ENCODE measurements at regions of chr3 and their contacts with region 1.

Region 1: DNA sequence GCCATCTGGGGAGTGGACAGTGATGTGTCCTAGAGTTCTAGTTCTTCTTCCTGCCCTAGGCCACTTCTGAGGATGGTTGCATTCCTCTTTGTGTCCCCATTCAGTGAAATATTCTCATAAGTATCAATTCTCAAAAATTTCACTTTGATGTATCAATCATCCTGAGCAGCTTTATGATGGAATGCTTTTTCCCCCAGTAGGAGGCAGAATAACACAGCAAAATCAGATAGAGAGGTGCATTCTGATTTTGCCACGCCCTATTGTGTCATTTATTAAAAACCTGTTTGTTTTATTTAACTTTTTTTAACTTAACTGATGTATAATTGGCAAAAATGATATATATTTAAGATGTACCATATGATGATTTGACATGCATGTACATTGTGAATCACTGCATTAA is 656.0 kb upstream of the GRM7 start:
- DNase-seq: no peak
- ATAC-seq: no peak
- H3K4me3 ChIP-seq: no peak overlapping the region
- H3K27ac ChIP-seq: no peak overlapping the region
- H3K4me1 ChIP-seq: no peaks in the 10 kb centered on the region
- H3K27me3 ChIP-seq: no peaks in the 10 kb centered on the region
- CTCF ChIP-seq: peak; percentile 13 to 55 (median 32); a peak in 4 of 6 replicates
- POLR2A ChIP-seq: no peak
- RAD21 ChIP-seq: peak; percentile 44; the same call in 1 of the 2 replicates

Region 2: GRCh38 chr3:5813521-5813920 is 391.4 kb before region 1 on chr3:
- CTCF ChIA-PET with region 1: no interaction called
- POLR2A ChIA-PET with region 1: no interaction called
- RAD21 ChIA-PET with region 1: no interaction called
- intact Hi-C with region 1: no loop called
- DNase-seq: no peak
- ATAC-seq: no peak
- H3K4me3 ChIP-seq: no peak overlapping the region
- H3K27ac ChIP-seq: no peak overlapping the region
- H3K4me1 ChIP-seq: no peaks in the 10 kb centered on the region
- H3K27me3 ChIP-seq: no peaks in the 10 kb centered on the region
- CTCF ChIP-seq: no peak
- POLR2A ChIP-seq: no peak
- RAD21 ChIP-seq: no peak

Region 3: GRCh38 chr3:6156386-6156785 is 48.5 kb before region 1 on chr3:
- CTCF ChIA-PET with region 1: no interaction called
- POLR2A ChIA-PET with region 1: no interaction called
- RAD21 ChIA-PET with region 1: no interaction called
- intact Hi-C with region 1: no loop called
- DNase-seq: no peak
- ATAC-seq: no peak
- H3K4me3 ChIP-seq: no peak overlapping the region
- H3K27ac ChIP-seq: no peak overlapping the region
- H3K4me1 ChIP-seq: 0 out of 4 replicates have a peak, but pooled peaks cover 0 to 5% of the 10 kb centered on the region in 2 experiments
- H3K27me3 ChIP-seq: no peaks in the 10 kb centered on the region
- CTCF ChIP-seq: no peak
- POLR2A ChIP-seq: no peak
- RAD21 ChIP-seq: no peak

Region 4: DNA sequence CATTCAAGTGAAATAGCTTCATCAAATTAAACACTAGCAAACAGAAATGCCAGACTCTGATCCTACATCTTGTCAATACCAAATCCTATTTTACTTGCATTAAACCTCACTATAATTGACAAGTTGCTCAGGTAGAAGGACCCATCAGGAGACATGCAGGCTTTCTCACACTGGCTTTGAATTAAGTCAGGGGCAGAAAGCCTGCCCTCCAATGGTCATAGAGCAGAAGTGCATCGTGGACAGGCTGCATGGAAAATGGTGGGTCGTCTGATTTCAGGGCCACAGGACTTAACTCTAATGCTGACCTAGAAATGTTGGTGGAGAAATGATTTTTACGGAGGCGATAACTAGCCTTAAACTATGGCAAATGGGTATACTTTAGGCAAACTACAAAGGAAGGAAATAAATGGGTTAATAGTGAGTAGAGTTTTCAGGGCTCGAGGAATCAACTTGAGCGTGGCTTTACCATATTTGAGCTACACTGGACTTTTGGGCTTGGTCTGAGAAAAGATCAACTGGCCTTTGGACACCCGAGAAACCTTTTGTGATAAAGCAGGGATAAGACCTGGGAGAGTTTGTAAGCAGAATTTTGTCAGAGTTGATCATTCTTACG is 939.9 kb after region 1 on chr3:
- CTCF ChIA-PET with region 1: no interaction called
- POLR2A ChIA-PET with region 1: no interaction called
- RAD21 ChIA-PET with region 1: no interaction called
- intact Hi-C with region 1: loop called (anchors 10 kb)
- DNase-seq: peak; percentile 31
- ATAC-seq: peak; percentile 79
- H3K4me3 ChIP-seq: no peak overlapping the region
- H3K27ac ChIP-seq: no peak overlapping the region
- H3K4me1 ChIP-seq: no peaks in the 10 kb centered on the region
- H3K27me3 ChIP-seq: no peaks in the 10 kb centered on the region
- CTCF ChIP-seq: peak; percentile 37 to 81 (median 78); a peak in 5 of 6 replicates
- POLR2A ChIP-seq: no peak
- RAD21 ChIP-seq: peak; percentile 50